Activated CD8-positive, alpha-beta memory T cell treated with anti-CD3 and anti-CD28 coated beads, Interleukin-2, amount 10 ng/mL, durations not matched to agents 7 days and 5 days (primary cell): ENCODE measurements at regions of chr22 and their contacts with region 1.

Region 1: DNA sequence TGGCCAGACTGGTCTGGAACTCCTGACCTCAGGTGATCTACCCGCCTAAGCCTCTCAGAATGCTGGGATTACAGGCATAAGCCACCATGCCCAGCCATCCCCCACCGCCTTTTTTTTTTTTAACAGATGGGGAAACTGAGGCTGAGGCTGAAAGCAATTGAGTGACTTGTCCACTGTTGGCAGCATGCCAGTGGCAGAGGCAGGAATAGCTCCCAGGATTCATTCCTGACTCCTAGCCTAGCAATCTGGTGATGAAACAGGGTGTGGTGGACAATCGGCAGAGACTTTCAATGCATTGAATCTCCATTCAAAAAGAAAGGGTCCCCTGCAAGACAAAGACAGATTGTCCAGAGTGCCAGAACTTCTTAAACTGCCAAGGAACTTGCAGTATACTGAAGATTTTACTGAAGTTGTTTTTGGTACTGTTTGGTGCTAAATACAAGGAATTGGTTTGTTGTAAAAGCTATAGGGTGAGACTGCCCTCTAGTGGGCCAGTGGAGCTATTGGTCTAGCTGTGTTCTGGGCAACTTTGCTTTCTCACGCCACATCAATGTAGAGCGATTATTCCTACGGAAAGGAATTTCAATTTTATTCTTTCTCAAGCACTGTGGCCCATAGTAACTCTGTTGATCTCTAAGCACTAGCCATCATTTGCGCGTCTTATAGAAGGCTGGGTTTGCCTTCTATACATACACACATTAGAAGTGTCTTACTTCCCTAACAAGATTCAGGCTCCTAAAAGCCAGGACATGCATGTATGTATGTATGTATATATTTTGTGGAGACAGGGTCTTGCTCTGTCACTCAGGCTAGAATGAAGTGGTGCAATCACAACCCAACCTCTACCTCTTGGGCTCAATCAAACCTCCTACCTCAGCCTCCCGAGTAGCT is 21.0 kb downstream of the C22orf31 start:
- DNase-seq: peak; percentile 71
- ATAC-seq: no peak
- H3K4me3 Mint-ChIP-seq: no peak overlapping the region
- H3K27ac Mint-ChIP-seq: no peak overlapping the region
- H3K4me1 Mint-ChIP-seq: no peaks in the 10 kb centered on the region
- H3K27me3 Mint-ChIP-seq: peaks cover 35% of the 10 kb centered on the region

Region 2: GRCh38 chr22:28600546-28601143 is 440.0 kb before region 1 on chr22:
- CTCF ChIA-PET with region 1: interaction called, 43 read pairs
- DNase-seq: no peak
- ATAC-seq: no peak
- H3K4me3 Mint-ChIP-seq: no peak overlapping the region
- H3K27ac Mint-ChIP-seq: no peak overlapping the region
- H3K4me1 Mint-ChIP-seq: no peaks in the 10 kb centered on the region
- H3K27me3 Mint-ChIP-seq: peaks cover 52% of the 10 kb centered on the region

Region 3: GRCh38 chr22:28855355-28856094 is 185.1 kb before region 1 on chr22:
- CTCF ChIA-PET with region 1: interaction called, 56 read pairs
- DNase-seq: peak; percentile 53
- ATAC-seq: no peak
- H3K4me3 Mint-ChIP-seq: no peak overlapping the region
- H3K27ac Mint-ChIP-seq: no peak overlapping the region
- H3K4me1 Mint-ChIP-seq: no peaks in the 10 kb centered on the region
- H3K27me3 Mint-ChIP-seq: peaks cover 21% of the 10 kb centered on the region

Region 4: DNA sequence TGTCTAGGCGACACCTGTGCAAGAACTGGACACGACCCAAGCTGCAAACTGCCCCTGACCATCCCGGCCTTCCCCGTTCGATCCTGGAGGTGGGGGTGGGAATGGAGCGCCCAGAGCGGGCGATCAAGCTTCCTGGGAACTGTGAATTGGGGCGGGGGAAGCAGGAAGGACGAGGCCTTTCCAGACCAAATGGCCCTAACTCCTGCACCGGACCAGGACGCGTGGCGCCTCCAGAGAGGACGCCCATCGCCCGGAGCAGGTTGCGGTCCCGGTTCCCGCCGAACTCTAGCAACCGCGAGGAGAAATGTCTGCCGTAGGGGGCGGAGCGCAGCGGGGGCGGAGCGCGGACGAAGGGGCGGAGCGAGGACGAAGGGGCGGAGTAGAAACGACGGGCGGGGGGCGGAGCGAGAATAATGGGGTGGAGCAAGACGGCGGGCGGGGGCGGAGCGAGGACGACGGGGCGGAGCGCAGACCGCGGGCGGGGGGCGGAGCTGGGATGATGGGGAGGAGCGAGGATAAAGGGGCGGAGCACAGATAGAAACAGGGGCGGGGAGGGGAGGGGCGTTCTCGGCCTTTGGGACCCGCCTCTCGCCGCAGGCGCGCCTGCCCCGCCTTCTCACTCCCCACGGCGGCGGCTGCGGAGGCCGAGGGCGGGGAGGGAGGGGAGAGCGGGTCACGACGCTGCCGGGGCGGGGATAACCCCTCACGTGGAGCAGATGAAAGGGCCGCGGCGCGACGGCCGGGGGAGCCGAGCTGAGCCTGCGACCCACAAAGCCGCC is 157.6 kb before region 1 on chr22 and contains the start of gene ZNRF3:
- CTCF ChIA-PET with region 1: interaction called, 10 read pairs
- DNase-seq: peak; percentile 89
- ATAC-seq: peak; percentile 89
- H3K4me3 Mint-ChIP-seq: peak within 1 kb of the TSS; percentile 70
- H3K27ac Mint-ChIP-seq: peak within 1 kb of the TSS; percentile 57
- H3K4me1 Mint-ChIP-seq: peaks cover 8% of the 10 kb centered on the region
- H3K27me3 Mint-ChIP-seq: peaks cover 61% of the 10 kb centered on the region
- total RNA-seq, gene ZNRF3: 0.26 to 0.79 TPM

Region 5: DNA sequence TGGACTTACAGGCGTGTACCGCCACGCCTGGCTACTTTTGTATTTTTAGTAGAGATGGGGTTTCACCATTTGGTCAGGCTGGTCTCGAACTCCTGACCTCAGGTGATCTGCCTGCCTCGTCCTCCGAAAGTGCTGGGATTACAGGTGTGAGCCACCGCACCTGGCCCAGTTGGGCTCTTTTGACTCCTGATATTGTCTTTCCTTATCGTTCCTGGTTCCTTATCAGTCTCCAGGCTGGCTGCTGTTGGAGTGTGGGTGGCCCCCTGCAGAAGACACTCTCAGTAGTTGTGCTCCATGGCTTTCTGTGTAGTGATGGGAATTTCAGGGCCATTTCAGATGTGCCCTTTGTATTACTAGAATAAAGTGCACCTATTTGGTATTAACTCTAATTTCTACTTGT is 34.3 kb before region 1 on chr22:
- CTCF ChIA-PET with region 1: no interaction called
- DNase-seq: no peak
- ATAC-seq: no peak
- H3K4me3 Mint-ChIP-seq: no peak overlapping the region
- H3K27ac Mint-ChIP-seq: no peak overlapping the region
- H3K4me1 Mint-ChIP-seq: no peaks in the 10 kb centered on the region
- H3K27me3 Mint-ChIP-seq: peaks cover 34% of the 10 kb centered on the region

Region 6: DNA sequence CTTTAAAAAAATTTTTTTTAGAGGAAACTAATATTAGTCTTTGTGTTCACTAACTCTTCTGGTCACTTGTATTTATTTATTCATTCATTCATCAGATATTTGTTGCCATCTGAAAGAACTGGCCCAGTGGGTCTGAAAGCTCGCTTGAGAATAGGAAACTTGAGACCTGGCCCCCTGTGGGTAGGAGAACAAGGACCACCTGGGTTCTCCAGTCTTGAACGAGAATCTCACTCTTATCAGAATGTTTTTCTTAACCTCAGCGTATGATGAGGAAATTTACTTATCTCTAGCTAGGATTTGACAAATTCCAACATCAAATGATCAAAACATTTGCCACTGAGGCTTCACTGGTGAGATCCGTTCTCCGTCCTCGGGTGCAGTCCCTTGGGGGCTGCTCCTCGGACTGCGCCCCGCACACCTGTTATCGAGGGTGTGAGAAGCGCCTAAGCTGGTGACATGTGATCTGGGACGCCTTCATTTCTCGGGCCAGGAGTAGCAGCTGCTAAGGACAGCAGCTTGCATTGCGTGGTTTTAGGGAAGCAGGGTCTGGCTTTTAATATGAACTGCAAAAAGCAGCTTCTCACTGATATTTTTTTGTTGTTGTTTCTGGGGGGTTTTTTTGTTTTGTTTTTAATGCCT is 14.7 kb after region 1 on chr22:
- CTCF ChIA-PET with region 1: interaction called, 26 read pairs
- DNase-seq: no peak
- ATAC-seq: no peak
- H3K4me3 Mint-ChIP-seq: no peak overlapping the region
- H3K27ac Mint-ChIP-seq: no peak overlapping the region
- H3K4me1 Mint-ChIP-seq: no peaks in the 10 kb centered on the region
- H3K27me3 Mint-ChIP-seq: peaks cover 22% of the 10 kb centered on the region

Region 7: GRCh38 chr22:29154364-29155048 is 113.9 kb after region 1 on chr22:
- CTCF ChIA-PET with region 1: interaction called, 12 read pairs
- DNase-seq: peak; percentile 84
- ATAC-seq: peak; percentile 91
- H3K4me3 Mint-ChIP-seq: peak overlapping the region; percentile 18
- H3K27ac Mint-ChIP-seq: no peak overlapping the region
- H3K4me1 Mint-ChIP-seq: peaks cover 21% of the 10 kb centered on the region
- H3K27me3 Mint-ChIP-seq: peaks cover 46% of the 10 kb centered on the region

Region 8: GRCh38 chr22:29245637-29246385 is 205.2 kb after region 1 on chr22:
- CTCF ChIA-PET with region 1: interaction called, 14 read pairs
- DNase-seq: peak; percentile 80
- ATAC-seq: peak; percentile 89
- H3K4me3 Mint-ChIP-seq: no peak overlapping the region
- H3K27ac Mint-ChIP-seq: no peak overlapping the region
- H3K4me1 Mint-ChIP-seq: no peaks in the 10 kb centered on the region
- H3K27me3 Mint-ChIP-seq: peaks cover 19% of the 10 kb centered on the region